CD4-positive, alpha-beta memory T cell (primary cell): ENCODE measurements at regions of chr6 and their contacts with region 1.

Region 1: GRCh38 chr6:106194949-106195921 is 109.1 kb downstream of the PRDM1 start:
- DNase-seq: peak; percentile 56 to 68 (median 59)
- H3K4me3 ChIP-seq: peak overlapping the region in 1 of 2 donors; percentile 14
- H3K4me3 Mint-ChIP-seq: peak overlapping the region; percentile 53 to 81 (median 73)
- H3K27ac ChIP-seq: peak overlapping the region; percentile 17
- H3K27ac Mint-ChIP-seq: peak overlapping the region; percentile 86 to 95 (median 88)
- H3K4me1 ChIP-seq: peaks cover 47% of the 10 kb centered on the region
- H3K4me1 Mint-ChIP-seq: peaks cover 29 to 51% (median 37%) of the 10 kb centered on the region in 4 donors
- H3K27me3 ChIP-seq: no peaks in the 10 kb centered on the region
- H3K27me3 Mint-ChIP-seq: no peaks in the 10 kb centered on the region

Region 2: DNA sequence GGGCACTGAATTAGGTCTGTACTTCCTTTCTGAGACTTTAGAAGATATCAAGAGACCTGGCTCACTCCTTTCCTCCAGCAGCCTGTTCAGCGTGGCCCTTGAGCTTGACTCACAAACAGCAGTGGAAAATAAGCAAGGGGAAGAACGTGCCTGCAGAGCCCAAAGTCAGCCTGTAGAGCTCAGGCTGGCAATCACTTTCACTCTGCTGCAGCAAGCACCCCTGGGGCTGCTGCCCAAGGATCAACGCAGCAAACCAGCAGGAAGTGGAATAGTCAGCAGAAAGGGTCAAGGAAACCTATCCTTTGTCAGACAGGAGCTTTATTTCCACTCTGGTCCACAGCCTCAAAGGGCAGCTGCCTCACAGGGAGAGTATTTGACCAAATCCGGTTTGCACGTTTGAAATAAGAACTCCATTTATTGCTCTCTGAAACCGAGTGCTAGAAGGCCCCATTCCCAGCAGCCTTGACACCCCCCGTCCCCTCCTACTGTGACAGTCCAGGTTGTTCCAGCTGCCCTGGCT is 31.7 kb before region 1 on chr6:
- CTCF ChIA-PET with region 1: interaction called, 10 read pairs
- POLR2A ChIA-PET with region 1: interaction called, 6 read pairs
- intact Hi-C with region 1: loop called (anchors 5 kb)
- DNase-seq: peak; percentile 44 to 73 (median 51)
- H3K4me3 ChIP-seq: peak overlapping the region in 1 of 2 donors; percentile 27
- H3K4me3 Mint-ChIP-seq: peak overlapping the region; percentile 46 to 78 (median 68)
- H3K27ac ChIP-seq: peak overlapping the region; percentile 57
- H3K27ac Mint-ChIP-seq: peak overlapping the region; percentile 74 to 98 (median 93)
- H3K4me1 ChIP-seq: peaks cover 32% of the 10 kb centered on the region
- H3K4me1 Mint-ChIP-seq: peaks cover 30 to 56% (median 42%) of the 10 kb centered on the region in 4 donors
- H3K27me3 ChIP-seq: no peaks in the 10 kb centered on the region
- H3K27me3 Mint-ChIP-seq: no peaks in the 10 kb centered on the region